ENCODE measurements at regions of chr12 and their contacts with region 1.

Region 1: GRCh38 chr12:132003846-132004245 is 54.1 kb downstream of the EP400 start:
- DNase-seq: no peak
- ATAC-seq: no peak
- H3K4me3 ChIP-seq: no peak overlapping the region
- H3K27ac ChIP-seq: no peak overlapping the region
- H3K4me1 ChIP-seq: no peaks in the 10 kb centered on the region
- H3K27me3 ChIP-seq: no peaks in the 10 kb centered on the region
- CTCF ChIP-seq: no peak
- POLR2A ChIP-seq: no peak

Region 2: DNA sequence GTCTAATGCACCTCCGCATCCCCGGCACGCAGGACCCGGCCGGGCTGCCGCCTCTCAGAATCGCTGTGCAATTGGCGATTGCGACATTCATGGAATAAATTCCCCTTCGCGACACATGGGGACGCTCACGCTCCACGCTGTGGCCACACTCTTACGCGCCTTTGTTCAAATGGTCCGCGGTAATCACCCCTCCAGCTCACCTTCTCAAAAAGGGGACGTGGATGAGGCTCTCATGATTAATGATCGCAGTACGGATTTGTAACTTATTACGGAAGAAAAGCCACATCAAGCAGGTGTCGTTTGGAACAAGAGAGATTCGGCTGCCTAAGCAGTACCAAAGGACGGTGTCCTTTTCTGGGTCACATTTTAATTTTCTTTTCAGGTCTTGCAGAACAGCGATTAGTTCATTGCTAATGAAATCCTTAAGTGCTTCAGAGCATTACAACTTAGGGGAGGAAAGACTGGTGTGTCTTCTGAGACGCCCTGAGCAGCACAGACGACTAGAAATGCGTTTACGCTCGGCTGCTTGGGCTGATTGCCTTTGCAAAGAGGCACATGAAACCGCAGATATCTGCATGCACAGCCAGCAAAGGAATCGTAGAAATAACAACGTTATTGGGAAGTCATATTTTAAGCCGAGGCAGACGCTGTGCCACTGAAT is 1087.5 kb before region 1 on chr12:
- in situ Hi-C with region 1: no loop called
- intact Hi-C with region 1: loop called (anchors 5 kb)
- DNase-seq: peak; percentile 25 to 34
- ATAC-seq: peak; percentile 63 to 74
- H3K4me3 ChIP-seq: peak overlapping the region in 1 of 4 donors; percentile 7
- H3K27ac ChIP-seq: no peak overlapping the region
- H3K4me1 ChIP-seq: peaks cover 0 to 3% of the 10 kb centered on the region in 2 donors
- H3K27me3 ChIP-seq: peaks cover 7 to 20% (median 11%) of the 10 kb centered on the region in 3 donors
- CTCF ChIP-seq: peak; percentile 73 to 91 (median 86)
- POLR2A ChIP-seq: no peak

Region 3: DNA sequence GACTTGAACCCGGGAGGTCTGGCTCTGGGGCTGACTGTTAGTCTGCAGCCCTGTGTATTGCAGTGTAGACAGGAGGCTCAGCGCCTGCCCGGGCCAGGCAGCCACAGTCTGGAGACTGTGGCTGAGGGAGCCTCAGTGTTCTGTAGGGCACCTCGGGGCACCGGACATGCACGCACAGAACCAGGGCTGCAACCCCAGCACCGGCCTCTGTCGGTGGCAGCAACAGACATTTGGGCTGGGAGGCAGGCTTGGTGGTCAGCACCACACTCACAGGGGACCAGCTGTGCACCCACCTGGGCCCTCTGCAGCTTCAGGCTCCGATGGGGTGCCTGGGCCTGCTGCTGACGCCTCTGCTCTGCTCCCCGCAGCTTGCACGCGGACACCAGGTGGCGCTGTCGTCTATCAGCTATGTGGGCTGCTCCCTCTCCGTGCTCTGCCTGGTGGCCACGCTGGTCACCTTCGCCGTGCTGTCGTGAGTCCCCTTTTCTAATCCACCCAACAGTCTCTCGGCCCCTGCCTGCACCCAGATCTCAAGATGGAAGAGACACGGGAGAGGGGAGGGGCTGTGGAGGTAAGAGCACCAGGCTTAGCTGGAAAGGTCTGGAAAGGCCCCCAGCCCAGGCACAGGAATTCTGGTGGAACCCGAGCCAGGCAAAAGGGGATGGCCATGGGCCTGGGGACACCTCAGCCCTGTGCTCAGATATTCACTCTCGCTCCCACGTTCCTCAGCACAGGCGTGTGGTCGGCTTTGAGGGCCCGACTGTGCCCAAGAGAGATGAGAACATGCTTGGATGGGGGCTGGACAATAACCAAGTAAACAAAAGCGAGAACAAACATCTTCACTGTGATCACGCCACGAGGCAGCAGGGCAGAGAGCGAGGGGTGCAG is 899.1 kb before region 1 on chr12:
- in situ Hi-C with region 1: loop called in 1 of 4 experiments (anchors 25 kb)
- intact Hi-C with region 1: loop called (anchors 5 kb)
- DNase-seq: peak; percentile 48 to 57
- ATAC-seq: peak; percentile 77 to 86
- H3K4me3 ChIP-seq: no peak overlapping the region
- H3K27ac ChIP-seq: no peak overlapping the region
- H3K4me1 ChIP-seq: peaks cover 3 to 5% of the 10 kb centered on the region in 2 donors
- H3K27me3 ChIP-seq: no peaks in the 10 kb centered on the region
- CTCF ChIP-seq: peak; percentile 70 to 84 (median 81)
- POLR2A ChIP-seq: no peak

Region 4: DNA sequence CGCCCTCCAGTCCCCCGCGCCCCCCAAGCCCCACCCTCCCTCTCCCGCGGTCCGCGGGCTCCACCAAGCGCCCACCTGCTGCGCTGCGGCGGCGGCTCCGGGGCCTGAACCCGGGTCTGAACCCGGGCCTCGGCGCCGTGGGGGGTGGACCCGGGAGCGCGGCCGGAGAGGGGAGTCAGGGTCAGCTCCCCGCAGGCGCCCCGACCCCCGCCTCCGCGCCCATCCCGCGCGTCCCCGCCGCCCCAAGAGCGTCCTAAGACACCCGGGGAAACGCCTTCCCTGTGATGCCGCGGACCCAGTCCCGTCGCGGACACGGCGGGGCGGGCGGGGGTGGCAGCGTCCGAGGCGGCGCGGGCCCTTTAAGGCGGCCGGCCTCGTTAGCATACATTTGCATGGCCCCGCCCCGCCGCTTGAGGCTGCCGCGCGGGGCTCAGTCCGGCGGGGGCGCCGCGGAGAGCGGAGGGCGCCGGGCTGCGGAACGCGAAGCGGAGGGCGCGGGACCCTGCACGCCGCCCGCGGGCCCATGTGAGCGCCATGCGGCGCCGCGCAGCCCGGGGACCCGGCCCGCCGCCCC is 175.8 kb before region 1 on chr12 and contains the start of gene MMP17:
- in situ Hi-C with region 1: no loop called
- intact Hi-C with region 1: no loop called
- DNase-seq: no peak
- ATAC-seq: peak; percentile 58 to 65
- H3K4me3 ChIP-seq: peak within 1 kb of the TSS; percentile 50 to 56 (median 52)
- H3K27ac ChIP-seq: no peak within 1 kb of the TSS
- H3K4me1 ChIP-seq: peaks cover 11 to 33% of the 10 kb centered on the region in 2 donors
- H3K27me3 ChIP-seq: peaks cover 36 to 54% (median 53%) of the 10 kb centered on the region in 3 donors
- CTCF ChIP-seq: no peak
- POLR2A ChIP-seq: peak; percentile 24 to 30
- total RNA-seq, gene MMP17: 0.75 to 1.6 (median 1.4) TPM in 3 of 4 donors, not detected in the other

Region 5: GRCh38 chr12:131850856-131851559 is 152.8 kb before region 1 on chr12:
- in situ Hi-C with region 1: no loop called
- intact Hi-C with region 1: loop called (anchors 1 kb)
- DNase-seq: peak in 1 of 2 donors; percentile 46
- ATAC-seq: peak; percentile 62 to 87
- H3K4me3 ChIP-seq: peak overlapping the region in 1 of 4 donors; percentile 21
- H3K27ac ChIP-seq: no peak overlapping the region
- H3K4me1 ChIP-seq: no peaks in the 10 kb centered on the region
- H3K27me3 ChIP-seq: peaks cover 4 to 14% (median 10%) of the 10 kb centered on the region in 3 donors
- CTCF ChIP-seq: peak; percentile 63 to 94 (median 83)
- POLR2A ChIP-seq: no peak

Region 6: DNA sequence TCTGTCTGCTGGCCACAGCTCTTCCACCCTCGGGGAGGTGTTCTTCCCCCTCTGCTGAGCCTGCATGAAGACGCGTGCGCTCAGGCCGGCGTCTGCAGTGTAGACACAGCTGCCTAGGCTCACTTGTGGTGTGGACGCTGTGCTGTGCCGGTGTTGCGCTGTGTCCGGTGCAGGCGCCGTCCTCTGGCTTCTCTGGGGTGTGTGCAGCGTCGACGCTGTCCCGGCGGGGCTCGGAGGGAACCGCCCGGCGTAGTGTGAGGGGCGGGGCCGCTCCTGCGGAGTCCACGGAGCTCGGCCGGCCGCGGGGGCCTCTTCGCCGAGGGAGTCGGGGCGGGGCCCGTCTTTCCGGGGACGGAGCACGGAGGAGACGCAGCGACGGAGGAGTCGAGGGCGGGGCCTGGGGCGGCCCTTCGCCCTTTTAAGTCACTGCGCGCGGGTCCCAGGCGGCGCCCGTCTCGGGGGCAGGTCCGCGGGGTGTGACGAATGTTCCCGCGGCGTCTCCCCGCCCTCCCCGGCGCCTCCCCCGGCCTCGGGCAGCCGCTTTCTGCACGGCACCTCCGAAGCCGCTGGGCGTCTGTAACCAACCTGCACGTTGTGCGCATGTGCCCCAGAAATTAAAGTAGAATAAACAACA is 185.6 kb after region 1 on chr12:
- in situ Hi-C with region 1: no loop called
- intact Hi-C with region 1: no loop called
- DNase-seq: peak; percentile 51 to 62
- ATAC-seq: peak; percentile 66 to 69
- H3K4me3 ChIP-seq: peak overlapping the region; percentile 56 to 65 (median 64)
- H3K27ac ChIP-seq: peak overlapping the region; percentile 31 to 77 (median 58)
- H3K4me1 ChIP-seq: peaks cover 0 to 7% of the 10 kb centered on the region in 2 donors
- H3K27me3 ChIP-seq: peaks cover 0 to 56% (median 44%) of the 10 kb centered on the region in 3 donors
- CTCF ChIP-seq: no peak
- POLR2A ChIP-seq: peak; percentile 33 to 67